Posterior vena cava (tissue), 2 donors: ENCODE measurements at regions of chr7 and their contacts with region 1.

Region 1: GRCh38 chr7:2354186-2354938 is at the start of gene EIF3B:
- DNase-seq: peak; percentile 97
- total RNA-seq, gene EIF3B: 78.1 to 90.1 TPM

Region 2: DNA sequence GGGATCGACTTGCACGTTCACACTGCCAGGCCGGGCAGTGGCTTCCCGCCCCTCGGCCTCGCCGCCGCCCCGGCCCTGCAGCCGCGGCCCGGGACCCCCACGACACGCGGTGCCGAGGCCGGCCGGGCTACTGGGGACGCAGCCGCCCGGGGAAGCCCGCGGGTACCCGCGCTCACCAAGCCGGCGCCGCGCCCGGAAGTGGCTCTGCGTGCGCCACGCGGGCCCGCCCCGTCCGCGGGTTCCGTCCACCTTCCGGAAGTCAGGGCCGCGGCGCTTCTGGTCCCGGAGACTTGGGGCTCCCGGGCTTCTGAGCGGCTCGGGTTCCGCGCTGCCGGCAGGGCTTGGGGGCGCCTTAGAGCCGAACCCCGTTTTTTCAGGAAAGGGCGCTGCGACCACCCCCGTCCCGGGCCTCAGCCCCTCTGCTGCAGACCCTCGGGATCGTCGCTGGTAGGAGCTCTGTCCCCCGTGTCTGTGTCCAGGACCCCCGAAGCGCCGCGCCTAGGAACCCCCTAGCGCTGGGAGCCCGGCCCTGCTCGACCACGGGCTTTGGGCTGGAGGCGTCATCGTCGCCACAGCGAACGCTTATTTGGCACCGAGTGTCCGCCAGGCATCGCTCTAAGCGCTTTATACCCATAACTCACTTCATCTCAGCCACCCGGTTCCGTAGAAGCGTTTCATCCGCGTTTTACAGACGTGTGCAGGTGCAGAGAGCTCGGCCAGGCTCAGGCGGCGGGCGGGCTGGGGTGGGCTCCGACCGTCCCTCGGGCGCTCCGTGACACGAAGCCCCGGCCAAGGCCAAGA is 784.3 kb before region 1 on chr7 and contains the start of gene PSMG3:
- intact Hi-C with region 1: loop called (anchors 5 to 10 kb)
- DNase-seq: peak; percentile 98
- total RNA-seq, gene PSMG3: 13.9 to 19.0 TPM

Region 3: DNA sequence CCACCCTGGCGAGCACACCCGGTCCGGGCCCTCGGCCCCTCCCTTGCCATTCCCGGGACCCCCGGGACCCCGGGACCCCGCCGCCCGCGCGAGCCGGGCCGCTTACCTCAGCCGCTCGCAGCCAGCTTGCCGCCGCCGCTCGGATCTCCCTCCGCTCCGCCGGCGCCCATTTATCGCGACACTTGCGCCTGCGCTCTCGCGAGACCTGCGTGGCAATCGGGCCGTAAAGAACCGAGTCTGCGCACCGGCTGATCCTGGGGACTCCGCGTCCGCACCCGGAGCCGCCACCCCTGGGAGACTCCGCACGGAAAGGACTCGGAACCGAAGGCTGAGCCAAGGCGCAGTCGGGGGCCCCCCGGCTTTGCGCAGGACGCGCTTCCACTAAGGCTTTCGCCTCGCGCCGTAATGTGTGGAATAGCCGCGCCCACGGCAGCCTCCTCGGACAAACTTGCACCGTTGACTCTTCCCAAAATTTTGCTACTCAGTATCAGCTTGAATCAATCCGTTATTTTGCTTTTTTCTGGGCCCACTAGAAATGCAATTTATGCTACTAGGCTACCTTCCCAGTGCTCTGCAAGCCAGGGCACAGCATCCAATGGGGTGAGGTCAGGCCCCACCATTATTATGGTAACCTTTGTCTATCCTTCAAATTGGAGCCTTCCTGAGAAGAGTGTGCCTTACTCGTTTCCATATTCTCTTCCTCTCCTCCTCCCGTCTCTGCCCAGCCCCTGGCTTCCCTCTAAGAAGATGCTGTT is 121.4 kb before region 1 on chr7 and contains the start of gene MAD1L1:
- intact Hi-C with region 1: loop called in 1 of 2 experiments (anchors 5 kb)
- DNase-seq: peak; percentile 98
- total RNA-seq, gene MAD1L1: 17.3 to 24.7 TPM